Mammary epithelial cell (primary cell): ENCODE measurements at regions of chr4 and their contacts with region 1.

Region 1: GRCh38 chr4:21765810-21766407 is 182.7 kb downstream of the KCNIP4 start:
- DNase-seq: peak; percentile 73
- H3K4me3 ChIP-seq: no peak overlapping the region
- H3K27ac ChIP-seq: no peak overlapping the region
- H3K4me1 ChIP-seq: peaks cover 13% of the 10 kb centered on the region
- H3K27me3 ChIP-seq: no peaks in the 10 kb centered on the region
- CTCF ChIP-seq: peak; percentile 85 to 98

Region 2: GRCh38 chr4:21067351-21067750 is 698.6 kb before region 1 on chr4:
- CTCF ChIA-PET with region 1: no interaction called
- dilution Hi-C with region 1: no loop called
- in situ Hi-C with region 1: no loop called
- intact Hi-C with region 1: no loop called
- DNase-seq: no peak
- H3K4me3 ChIP-seq: no peak overlapping the region
- H3K27ac ChIP-seq: no peak overlapping the region
- H3K4me1 ChIP-seq: no peaks in the 10 kb centered on the region
- H3K27me3 ChIP-seq: no peaks in the 10 kb centered on the region
- CTCF ChIP-seq: no peak

Region 3: DNA sequence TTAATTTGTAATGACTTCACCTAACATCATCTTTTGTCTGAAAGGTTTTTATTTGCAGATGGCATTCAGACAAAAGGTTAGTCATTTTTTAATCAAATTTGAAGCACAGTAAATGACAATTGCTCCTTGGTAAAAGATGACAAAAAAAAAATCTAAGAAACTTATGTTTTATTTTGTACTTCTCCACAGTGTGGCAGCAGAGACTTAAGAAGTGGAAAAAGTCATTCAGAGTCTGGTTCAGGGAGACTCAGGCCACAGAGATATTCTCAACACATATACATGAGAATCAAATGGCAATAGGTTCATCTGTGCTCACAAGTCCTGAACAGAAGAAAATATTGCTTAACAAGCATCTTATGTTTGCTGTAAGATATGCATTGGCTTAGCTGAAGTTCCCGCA is 253.6 kb before region 1 on chr4:
- CTCF ChIA-PET with region 1: no interaction called
- dilution Hi-C with region 1: loop called (anchors 5 kb)
- in situ Hi-C with region 1: loop called (anchors 5 to 10 kb)
- intact Hi-C with region 1: loop called (anchors 1 kb)
- DNase-seq: peak; percentile 32
- H3K4me3 ChIP-seq: no peak overlapping the region
- H3K27ac ChIP-seq: no peak overlapping the region
- H3K4me1 ChIP-seq: no peaks in the 10 kb centered on the region
- H3K27me3 ChIP-seq: peaks cover 9% of the 10 kb centered on the region
- CTCF ChIP-seq: peak; percentile 37 to 57

Region 4: DNA sequence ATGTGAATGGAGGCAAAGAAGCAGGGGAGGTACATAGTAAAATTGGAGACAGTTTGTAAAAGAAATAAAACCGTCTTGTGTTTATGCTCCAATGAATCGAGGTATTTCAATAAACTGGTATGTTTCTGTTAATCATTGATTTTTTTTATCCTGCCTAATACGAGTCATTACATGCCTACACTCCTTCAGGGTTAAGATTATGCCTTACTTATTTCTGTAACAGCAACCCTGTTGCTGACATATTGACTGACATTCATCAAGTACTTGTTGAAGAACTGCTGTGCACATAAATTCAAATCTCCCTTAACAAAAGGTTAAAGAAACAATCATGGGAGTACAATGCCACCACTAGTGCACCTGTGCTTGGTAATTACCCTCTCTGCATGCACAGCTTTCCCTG is 248.4 kb before region 1 on chr4:
- CTCF ChIA-PET with region 1: no interaction called
- dilution Hi-C with region 1: loop called (anchors 5 kb)
- in situ Hi-C with region 1: no loop called
- intact Hi-C with region 1: loop called (anchors 1 kb)
- DNase-seq: no peak
- H3K4me3 ChIP-seq: no peak overlapping the region
- H3K27ac ChIP-seq: no peak overlapping the region
- H3K4me1 ChIP-seq: no peaks in the 10 kb centered on the region
- H3K27me3 ChIP-seq: peaks cover 9% of the 10 kb centered on the region
- CTCF ChIP-seq: no peak

Region 5: DNA sequence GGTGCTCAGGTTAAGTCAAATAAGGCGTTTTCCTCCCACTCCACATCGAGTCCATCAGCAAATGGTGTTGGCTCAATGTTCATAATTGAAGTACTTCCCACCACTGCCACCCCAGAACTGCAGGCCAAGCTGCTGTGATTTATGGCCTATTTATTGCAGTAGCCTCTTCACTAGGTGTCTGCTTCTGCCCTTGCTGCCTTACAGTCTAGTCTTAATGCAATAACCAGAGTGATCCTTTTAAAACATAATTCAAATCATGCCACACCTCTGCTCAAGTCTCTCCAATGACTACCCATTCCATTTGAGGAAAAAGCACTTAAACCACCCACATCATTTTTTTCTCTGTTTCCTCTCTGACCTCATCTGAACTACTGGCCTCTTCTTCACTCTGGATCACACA is 37.6 kb before region 1 on chr4:
- CTCF ChIA-PET with region 1: no interaction called
- dilution Hi-C with region 1: no loop called
- in situ Hi-C with region 1: no loop called
- intact Hi-C with region 1: no loop called
- DNase-seq: no peak
- H3K4me3 ChIP-seq: no peak overlapping the region
- H3K27ac ChIP-seq: no peak overlapping the region
- H3K4me1 ChIP-seq: no peaks in the 10 kb centered on the region
- H3K27me3 ChIP-seq: no peaks in the 10 kb centered on the region
- CTCF ChIP-seq: no peak